Heart left ventricle (tissue), 16 donors: ENCODE measurements at regions of chr12 and their contacts with region 1.

Region 1: DNA sequence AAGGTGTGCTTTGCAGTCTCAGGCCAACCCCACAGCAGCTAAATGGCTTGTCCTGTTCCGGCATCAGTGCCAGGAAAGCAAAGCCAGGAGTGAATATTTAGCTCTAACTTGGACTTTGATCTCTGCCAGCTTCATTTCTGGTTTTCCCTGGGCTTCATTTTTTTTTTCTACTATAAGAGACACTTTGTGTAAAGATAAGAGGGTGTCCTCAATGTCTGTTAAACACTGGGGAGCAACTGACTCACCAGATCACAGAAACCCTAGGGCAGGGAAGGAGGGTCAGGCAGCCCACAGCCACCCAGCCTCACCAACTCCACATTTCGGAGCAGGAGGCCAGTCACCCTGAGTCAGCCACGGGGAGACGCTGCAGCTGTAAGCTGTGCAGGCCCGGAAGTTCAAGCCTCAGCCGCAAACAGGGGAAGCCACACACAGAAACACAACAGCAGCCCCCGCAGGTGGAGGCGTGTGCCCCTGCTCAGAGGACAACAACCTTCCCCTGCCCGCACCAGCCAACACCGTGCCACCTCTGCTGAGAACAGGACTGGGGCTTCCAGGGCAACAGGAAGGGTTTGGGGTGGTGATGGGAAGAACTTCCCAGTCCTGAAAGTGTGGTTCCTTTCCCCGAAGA is 6.3 kb downstream of the TNFRSF1A start:
- DNase-seq: peak; percentile 78 to 91 (median 82)
- ATAC-seq: peak; percentile 43 to 63 (median 52)
- H3K4me3 ChIP-seq: peak overlapping the region in 11 of 12 donors; percentile 27 to 100 (median 82)
- H3K27ac ChIP-seq: peak overlapping the region; percentile 86 to 100 (median 98)
- H3K4me1 ChIP-seq: peaks cover 6 to 87% (median 67%) of the 10 kb centered on the region in 12 donors
- H3K27me3 ChIP-seq: no peaks in the 10 kb centered on the region
- CTCF ChIP-seq: peak in 11 of 12 donors; percentile 25 to 68 (median 50)
- POLR2A ChIP-seq: no peak

Region 2: GRCh38 chr12:5633106-5633505 is 702.5 kb before region 1 on chr12:
- intact Hi-C with region 1: no loop called
- DNase-seq: no peak
- ATAC-seq: peak in 2 of 4 donors; percentile 28 to 73
- H3K4me3 ChIP-seq: no peak overlapping the region
- H3K27ac ChIP-seq: peak overlapping the region in 2 of 12 donors; percentile 18 to 30
- H3K4me1 ChIP-seq: peaks cover 0 to 22% (median 0%) of the 10 kb centered on the region in 12 donors
- H3K27me3 ChIP-seq: peaks cover 0 to 6% (median 0%) of the 10 kb centered on the region in 9 donors
- CTCF ChIP-seq: no peak
- POLR2A ChIP-seq: no peak

Region 3: GRCh38 chr12:6241495-6241894 is 94.1 kb before region 1 on chr12:
- intact Hi-C with region 1: no loop called
- DNase-seq: peak; percentile 75 to 86 (median 84)
- ATAC-seq: peak; percentile 46 to 83 (median 76)
- H3K4me3 ChIP-seq: no peak overlapping the region
- H3K27ac ChIP-seq: peak overlapping the region in 5 of 12 donors; percentile 13 to 34 (median 20)
- H3K4me1 ChIP-seq: peaks cover 0 to 15% (median 11%) of the 10 kb centered on the region in 12 donors
- H3K27me3 ChIP-seq: no peaks in the 10 kb centered on the region
- CTCF ChIP-seq: no peak
- POLR2A ChIP-seq: no peak

Region 4: GRCh38 chr12:6367065-6367968 is 31.8 kb after region 1 on chr12:
- intact Hi-C with region 1: loop called in 2 of 10 experiments (anchors 2 to 5 kb)
- DNase-seq: peak in 1 of 5 donors; percentile 25
- ATAC-seq: peak in 1 of 4 donors; percentile 25
- H3K4me3 ChIP-seq: no peak overlapping the region
- H3K27ac ChIP-seq: peak overlapping the region in 1 of 12 donors; percentile 80
- H3K4me1 ChIP-seq: peaks cover 0 to 48% (median 9%) of the 10 kb centered on the region in 12 donors
- H3K27me3 ChIP-seq: no peaks in the 10 kb centered on the region
- CTCF ChIP-seq: peak in 9 of 12 donors; percentile 8 to 45 (median 29)
- POLR2A ChIP-seq: no peak

Region 5: GRCh38 chr12:6376079-6376869 is 40.7 kb after region 1 on chr12:
- intact Hi-C with region 1: loop called in 7 of 10 experiments (anchors 5 kb)
- DNase-seq: peak in 4 of 5 donors; percentile 36 to 73 (median 64)
- ATAC-seq: peak; percentile 40 to 76 (median 74)
- H3K4me3 ChIP-seq: no peak overlapping the region
- H3K27ac ChIP-seq: peak overlapping the region in 9 of 12 donors; percentile 6 to 69 (median 47)
- H3K4me1 ChIP-seq: peaks cover 0 to 65% (median 22%) of the 10 kb centered on the region in 12 donors
- H3K27me3 ChIP-seq: no peaks in the 10 kb centered on the region
- CTCF ChIP-seq: peak in 9 of 12 donors; percentile 19 to 54 (median 32)
- POLR2A ChIP-seq: no peak

Region 6: DNA sequence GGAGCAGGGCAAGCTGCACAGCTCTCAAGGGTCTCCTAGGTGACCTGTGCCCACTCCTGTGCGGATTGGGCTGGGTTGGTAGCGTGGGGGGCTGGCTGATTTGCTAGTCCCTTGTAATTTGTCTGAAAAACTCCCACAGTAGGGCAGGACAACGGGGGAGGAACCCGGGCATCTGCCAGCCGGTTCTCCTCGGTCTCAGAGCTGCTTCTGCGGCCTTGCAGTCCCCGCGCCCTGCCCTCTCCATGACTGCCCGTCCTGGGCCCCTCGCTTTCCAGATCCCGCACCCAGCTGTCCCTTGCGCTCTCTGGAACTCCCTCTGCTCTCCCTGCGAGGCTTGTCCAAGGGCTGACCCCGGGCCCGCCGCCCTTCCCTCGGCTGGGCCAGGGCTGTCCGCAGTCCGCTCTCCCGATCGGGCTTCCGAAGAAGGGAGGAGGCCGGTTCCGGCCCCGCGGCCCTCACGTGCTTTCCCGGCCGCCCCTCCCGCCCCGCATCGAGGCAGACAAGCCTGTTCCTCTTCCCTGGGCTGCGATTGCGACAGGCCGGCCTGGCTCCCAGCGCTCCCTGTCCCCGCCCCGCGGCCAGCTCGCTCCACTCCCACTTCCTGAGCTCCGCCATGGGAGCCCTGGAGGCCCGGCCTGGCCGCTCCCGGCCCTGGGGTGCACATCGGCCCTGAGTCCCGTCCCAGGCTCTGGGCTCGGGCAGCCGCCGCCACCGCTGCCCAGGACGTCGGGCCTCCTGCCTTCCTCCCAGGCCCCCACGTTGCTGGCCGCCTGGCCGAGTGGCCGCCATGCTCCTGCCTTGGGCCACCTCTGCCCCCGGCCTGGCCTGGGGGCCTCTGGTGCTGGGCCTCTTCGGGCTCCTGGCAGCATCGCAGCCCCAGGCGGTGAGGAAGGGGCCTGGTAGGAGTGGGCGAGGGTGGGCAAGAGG is 48.3 kb after region 1 on chr12 and contains the start of gene LTBR:
- intact Hi-C with region 1: loop called in 9 of 10 experiments (anchors 2 to 5 kb)
- DNase-seq: peak; percentile 96 to 99 (median 98)
- ATAC-seq: peak; percentile 92 to 98 (median 97)
- H3K4me3 ChIP-seq: peak within 1 kb of the TSS; percentile 45 to 92 (median 78)
- H3K27ac ChIP-seq: peak within 1 kb of the TSS; percentile 75 to 98 (median 94)
- H3K4me1 ChIP-seq: peaks cover 0 to 75% (median 24%) of the 10 kb centered on the region in 12 donors
- H3K27me3 ChIP-seq: no peaks in the 10 kb centered on the region
- CTCF ChIP-seq: peak in 3 of 12 donors; percentile 7 to 43 (median 32)
- POLR2A ChIP-seq: peak in 1 of 2 donors; percentile 74
- total RNA-seq, gene LTBR: 16.0 to 83.4 (median 26.2) TPM

Region 7: DNA sequence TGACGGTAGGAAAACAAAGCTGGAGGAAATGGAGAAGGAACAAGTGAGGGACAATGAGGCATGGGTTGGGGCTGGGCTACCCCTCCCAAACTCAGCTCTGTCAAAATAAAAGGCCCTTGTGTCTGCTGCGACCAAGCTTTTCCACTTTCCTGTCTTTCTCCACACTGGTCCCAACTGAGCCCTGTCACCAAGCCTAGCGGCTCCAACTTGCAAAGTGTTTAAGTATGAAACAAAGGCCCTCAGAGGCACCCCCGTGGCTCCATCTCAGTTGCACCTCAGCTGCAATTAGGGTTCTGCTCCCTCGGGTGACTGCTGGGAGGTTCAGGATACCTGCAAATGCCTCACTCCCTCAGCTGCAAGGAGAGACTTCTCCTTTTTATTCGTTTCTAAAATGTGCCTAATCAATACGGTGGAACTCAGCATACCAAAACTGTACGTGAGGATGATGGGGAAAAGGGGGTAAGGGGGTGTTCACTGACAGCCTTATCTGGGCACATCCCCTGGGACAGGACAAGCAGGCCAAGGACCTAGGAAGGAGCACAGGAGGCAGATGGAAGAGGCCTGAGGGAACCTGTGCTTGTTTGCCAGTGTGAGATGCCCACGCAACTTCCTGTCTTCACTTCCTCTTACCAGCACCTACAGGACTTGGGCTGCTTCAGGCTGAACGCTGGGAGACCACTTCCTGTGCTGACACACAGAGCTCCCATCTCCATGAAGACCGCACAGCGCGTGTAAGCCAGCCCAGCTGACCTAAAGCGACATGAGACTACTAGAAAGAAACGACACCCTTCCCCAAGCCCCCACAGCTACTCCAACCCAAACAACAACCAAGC is 126.1 kb after region 1 on chr12:
- intact Hi-C with region 1: loop called in 5 of 10 experiments (anchors 5 kb)
- DNase-seq: peak; percentile 44 to 71 (median 48)
- ATAC-seq: peak in 3 of 4 donors; percentile 15 to 64 (median 23)
- H3K4me3 ChIP-seq: peak overlapping the region in 1 of 12 donors; percentile 29
- H3K27ac ChIP-seq: peak overlapping the region in 10 of 12 donors; percentile 24 to 84 (median 58)
- H3K4me1 ChIP-seq: peaks cover 0 to 72% (median 15%) of the 10 kb centered on the region in 12 donors
- H3K27me3 ChIP-seq: no peaks in the 10 kb centered on the region
- CTCF ChIP-seq: no peak
- POLR2A ChIP-seq: no peak

Region 8: GRCh38 chr12:6470375-6471163 is 135.0 kb after region 1 on chr12 and contains the start of gene VAMP1:
- intact Hi-C with region 1: loop called in 3 of 10 experiments (anchors 5 kb)
- DNase-seq: peak; percentile 98 to 99 (median 98)
- ATAC-seq: peak; percentile 97 to 99 (median 98)
- H3K4me3 ChIP-seq: peak within 1 kb of the TSS; percentile 44 to 86 (median 71)
- H3K27ac ChIP-seq: peak within 1 kb of the TSS; percentile 25 to 91 (median 84)
- H3K4me1 ChIP-seq: peaks cover 0 to 43% (median 19%) of the 10 kb centered on the region in 12 donors
- H3K27me3 ChIP-seq: no peaks in the 10 kb centered on the region
- CTCF ChIP-seq: peak in 1 of 12 donors; percentile 2
- POLR2A ChIP-seq: peak; percentile 97 to 100
- total RNA-seq, gene VAMP1: 2.1 to 8.3 (median 3.4) TPM

Region 9: DNA sequence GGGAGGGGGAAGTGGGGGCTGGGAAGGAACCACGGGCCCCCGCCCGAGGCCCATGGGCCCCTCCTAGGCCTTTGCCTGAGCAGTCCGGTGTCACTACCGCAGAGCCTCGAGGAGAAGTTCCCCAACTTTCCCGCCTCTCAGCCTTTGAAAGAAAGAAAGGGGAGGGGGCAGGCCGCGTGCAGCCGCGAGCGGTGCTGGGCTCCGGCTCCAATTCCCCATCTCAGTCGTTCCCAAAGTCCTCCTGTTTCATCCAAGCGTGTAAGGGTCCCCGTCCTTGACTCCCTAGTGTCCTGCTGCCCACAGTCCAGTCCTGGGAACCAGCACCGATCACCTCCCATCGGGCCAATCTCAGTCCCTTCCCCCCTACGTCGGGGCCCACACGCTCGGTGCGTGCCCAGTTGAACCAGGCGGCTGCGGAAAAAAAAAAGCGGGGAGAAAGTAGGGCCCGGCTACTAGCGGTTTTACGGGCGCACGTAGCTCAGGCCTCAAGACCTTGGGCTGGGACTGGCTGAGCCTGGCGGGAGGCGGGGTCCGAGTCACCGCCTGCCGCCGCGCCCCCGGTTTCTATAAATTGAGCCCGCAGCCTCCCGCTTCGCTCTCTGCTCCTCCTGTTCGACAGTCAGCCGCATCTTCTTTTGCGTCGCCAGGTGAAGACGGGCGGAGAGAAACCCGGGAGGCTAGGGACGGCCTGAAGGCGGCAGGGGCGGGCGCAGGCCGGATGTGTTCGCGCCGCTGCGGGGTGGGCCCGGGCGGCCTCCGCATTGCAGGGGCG is 198.5 kb after region 1 on chr12 and contains the start of gene GAPDH:
- intact Hi-C with region 1: loop called in 7 of 10 experiments (anchors 5 to 10 kb)
- DNase-seq: peak; percentile 95 to 97 (median 95)
- ATAC-seq: peak; percentile 74 to 83 (median 78)
- H3K4me3 ChIP-seq: peak within 1 kb of the TSS; percentile 64 to 100 (median 90)
- H3K27ac ChIP-seq: peak within 1 kb of the TSS; percentile 90 to 100 (median 96)
- H3K4me1 ChIP-seq: peaks cover 0 to 57% (median 45%) of the 10 kb centered on the region in 12 donors
- H3K27me3 ChIP-seq: no peaks in the 10 kb centered on the region
- CTCF ChIP-seq: no peak
- POLR2A ChIP-seq: peak in 1 of 2 donors; percentile 94
- total RNA-seq, gene GAPDH: 3,379 to 7,430 (median 4,887) TPM